Activated CD8-positive, alpha-beta T cell treated with anti-CD3 and anti-CD28 coated beads for 36 hours (primary cell): ENCODE measurements at regions of chr11 and their contacts with region 1.

Region 1: GRCh38 chr11:20671856-20672546 is 2.6 kb downstream of the NELL1 start:
- DNase-seq: no peak
- ATAC-seq: no peak
- H3K4me3 Mint-ChIP-seq: no peak overlapping the region
- H3K27ac Mint-ChIP-seq: no peak overlapping the region
- H3K4me1 Mint-ChIP-seq: no peaks in the 10 kb centered on the region
- H3K27me3 Mint-ChIP-seq: peaks cover 47% of the 10 kb centered on the region
- CTCF ChIP-seq: no peak

Region 2: GRCh38 chr11:20658135-20658534 is 13.9 kb before region 1 on chr11:
- CTCF ChIA-PET with region 1: interaction called, 10 read pairs
- POLR2A ChIA-PET with region 1: no interaction called
- intact Hi-C with region 1: no loop called
- DNase-seq: no peak
- ATAC-seq: no peak
- H3K4me3 Mint-ChIP-seq: no peak overlapping the region
- H3K27ac Mint-ChIP-seq: no peak overlapping the region
- H3K4me1 Mint-ChIP-seq: no peaks in the 10 kb centered on the region
- H3K27me3 Mint-ChIP-seq: peaks cover 14% of the 10 kb centered on the region
- CTCF ChIP-seq: no peak